ENCODE measurements at regions of chr7 and their contacts with region 1.

Region 1: DNA sequence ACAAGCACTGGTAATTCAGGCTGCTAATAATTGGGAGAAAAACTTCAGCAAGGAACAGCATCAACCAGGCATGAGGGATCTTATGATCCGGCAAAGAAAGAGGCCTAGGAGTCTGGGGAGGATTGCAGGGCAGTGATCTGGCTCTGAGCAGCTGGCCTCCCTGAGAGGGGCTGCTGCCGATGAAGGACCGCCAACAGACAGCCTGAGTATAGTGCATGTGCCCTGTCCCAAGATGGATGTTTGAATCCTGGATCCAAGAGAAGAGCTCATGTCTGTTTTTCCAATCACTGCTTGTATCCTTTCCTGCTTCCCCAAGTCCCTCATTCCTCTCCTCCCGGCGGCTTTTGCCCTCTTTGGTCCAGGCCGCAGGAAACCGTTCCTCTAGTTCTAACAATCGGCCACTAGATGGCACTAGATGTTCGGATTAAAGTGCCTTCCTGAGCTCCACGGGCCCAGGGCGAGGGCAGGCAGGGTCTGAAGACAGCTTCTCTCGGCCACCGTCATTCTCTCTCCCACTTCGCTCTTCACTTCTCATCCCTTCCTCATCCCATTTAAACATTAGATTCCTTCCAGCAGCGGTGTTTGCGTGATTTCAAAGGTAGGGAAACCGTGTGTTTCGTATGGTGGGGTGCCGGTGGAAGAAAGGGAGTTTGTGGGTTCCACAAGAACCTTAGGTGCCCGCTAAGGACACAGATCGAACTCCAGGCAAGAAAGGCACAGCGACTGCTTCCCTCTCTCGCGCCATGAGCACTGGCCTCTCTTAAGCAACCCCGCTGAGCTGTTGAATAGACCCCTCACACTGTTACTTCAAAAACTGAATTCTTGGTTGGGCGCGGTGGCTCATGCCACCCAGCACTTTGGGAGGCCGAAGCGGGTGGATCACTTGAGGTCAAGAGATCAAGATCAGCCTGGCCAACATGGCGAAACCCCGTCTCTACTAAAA is 82.4 kb downstream of the ADCYAP1R1 start:
- DNase-seq: peak; percentile 88
- H3K4me3 ChIP-seq: no peak overlapping the region
- H3K27ac ChIP-seq: no peak overlapping the region
- H3K4me1 ChIP-seq: peaks cover 0 to 6% (median 0%) of the 10 kb centered on the region in 4 donors
- H3K27me3 ChIP-seq: peaks cover 0 to 4% (median 0%) of the 10 kb centered on the region in 4 donors
- CTCF ChIP-seq: peak; percentile 61 to 76 (median 75)
- EP300 ChIP-seq: no peak
- POLR2A ChIP-seq: no peak

Region 2: DNA sequence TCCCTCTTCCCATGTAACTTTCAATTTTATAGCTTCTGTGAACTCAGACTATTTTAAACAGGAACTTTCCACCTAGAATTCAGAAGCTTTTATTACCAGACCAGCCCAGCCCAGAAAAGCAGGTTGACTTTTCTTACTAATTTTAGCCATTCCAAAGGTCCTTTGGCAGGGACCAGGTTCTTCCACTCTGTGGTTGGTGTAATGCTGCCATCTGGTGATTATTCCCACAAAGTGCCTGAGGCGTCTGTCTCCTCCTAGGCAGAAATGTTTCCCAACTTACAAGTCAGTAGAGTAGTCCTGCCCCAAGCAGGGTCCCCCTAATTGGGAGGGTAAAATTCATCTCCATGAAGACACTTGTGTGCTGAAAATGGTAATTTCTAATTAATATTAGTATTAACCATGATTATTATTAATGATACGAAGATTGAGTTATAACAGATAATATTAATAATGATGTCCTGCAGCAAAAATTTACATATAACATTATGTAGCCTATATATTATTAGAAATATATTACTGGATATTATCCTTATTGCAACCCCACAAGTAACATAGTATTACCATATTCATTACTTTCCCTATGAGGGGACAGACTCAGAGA is 499.5 kb after region 1 on chr7:
- intact Hi-C with region 1: loop called (anchors 5 kb)
- DNase-seq: no peak
- H3K4me3 ChIP-seq: no peak overlapping the region
- H3K27ac ChIP-seq: no peak overlapping the region
- H3K4me1 ChIP-seq: no peaks in the 10 kb centered on the region
- H3K27me3 ChIP-seq: no peaks in the 10 kb centered on the region
- CTCF ChIP-seq: peak; percentile 48 to 71 (median 63)
- EP300 ChIP-seq: no peak
- POLR2A ChIP-seq: no peak

Region 3: GRCh38 chr7:31735991-31736982 is 601.8 kb after region 1 on chr7:
- intact Hi-C with region 1: loop called (anchors 1 kb)
- DNase-seq: no peak
- H3K4me3 ChIP-seq: no peak overlapping the region
- H3K27ac ChIP-seq: no peak overlapping the region
- H3K4me1 ChIP-seq: no peaks in the 10 kb centered on the region
- H3K27me3 ChIP-seq: no peaks in the 10 kb centered on the region
- CTCF ChIP-seq: peak; percentile 77 to 90 (median 79)
- EP300 ChIP-seq: no peak
- POLR2A ChIP-seq: no peak

Measured in esophagus muscularis mucosa (tissue), 4 donors.